ENCODE measurements at regions of chr21 and their contacts with region 1.

Region 1: GRCh38 chr21:38126669-38127303 is 130.0 kb upstream of the KCNJ15 start:
- DNase-seq: peak; percentile 48 to 62
- ATAC-seq: peak; percentile 52 to 84 (median 76)
- H3K4me3 ChIP-seq: no peak overlapping the region
- H3K27ac ChIP-seq: no peak overlapping the region
- H3K4me1 ChIP-seq: no peaks in the 10 kb centered on the region
- H3K27me3 ChIP-seq: peaks cover 0 to 2% (median 0%) of the 10 kb centered on the region in 3 donors
- CTCF ChIP-seq: peak; percentile 62

Region 2: GRCh38 chr21:37675202-37675801 is 451.5 kb before region 1 on chr21:
- intact Hi-C with region 1: loop called in 1 of 2 experiments (anchors 10 kb)
- DNase-seq: peak; percentile 62 to 77
- ATAC-seq: peak; percentile 62 to 88 (median 74)
- H3K4me3 ChIP-seq: peak overlapping the region; percentile 48
- H3K27ac ChIP-seq: no peak overlapping the region
- H3K4me1 ChIP-seq: no peaks in the 10 kb centered on the region
- H3K27me3 ChIP-seq: peaks cover 0 to 6% (median 3%) of the 10 kb centered on the region in 3 donors
- CTCF ChIP-seq: peak; percentile 97

Region 3: GRCh38 chr21:37711836-37712568 is 414.8 kb before region 1 on chr21:
- intact Hi-C with region 1: loop called (anchors 5 to 10 kb)
- DNase-seq: peak; percentile 54 to 65
- ATAC-seq: peak; percentile 62 to 84 (median 76)
- H3K4me3 ChIP-seq: no peak overlapping the region
- H3K27ac ChIP-seq: no peak overlapping the region
- H3K4me1 ChIP-seq: no peaks in the 10 kb centered on the region
- H3K27me3 ChIP-seq: no peaks in the 10 kb centered on the region
- CTCF ChIP-seq: peak; percentile 62